Common myeloid progenitor, CD34-positive (primary cell): ENCODE measurements at regions of chr12 and their contacts with region 1.

Region 1: DNA sequence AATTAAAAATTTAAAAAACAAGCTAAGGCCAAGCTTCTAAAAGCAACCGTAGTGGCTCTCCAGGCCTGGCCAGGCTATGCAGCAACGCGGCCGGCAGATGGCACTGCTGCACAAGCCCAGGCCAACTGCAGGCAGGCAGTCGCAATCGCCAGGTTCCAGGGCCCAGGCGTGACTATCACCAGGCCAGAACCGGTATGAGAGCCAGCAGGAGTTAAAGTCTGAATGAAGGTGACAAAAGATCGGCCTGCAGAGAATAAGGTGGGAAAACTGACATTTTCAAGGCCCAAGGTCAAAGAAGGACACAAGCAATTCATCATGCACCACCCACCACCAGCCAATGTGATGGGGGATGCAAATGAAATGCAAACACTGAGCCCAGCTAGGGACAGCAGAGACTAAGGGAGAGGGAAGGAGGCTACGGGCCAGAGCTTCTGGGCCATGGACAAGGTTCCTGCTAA is 43.6 kb upstream of the ANO2 start:
- DNase-seq: peak; percentile 69 to 88 (median 81)
- H3K4me3 ChIP-seq: no peak overlapping the region
- H3K27ac ChIP-seq: no peak overlapping the region
- H3K4me1 ChIP-seq: no peaks in the 10 kb centered on the region
- H3K27me3 ChIP-seq: no peaks in the 10 kb centered on the region

Region 2: DNA sequence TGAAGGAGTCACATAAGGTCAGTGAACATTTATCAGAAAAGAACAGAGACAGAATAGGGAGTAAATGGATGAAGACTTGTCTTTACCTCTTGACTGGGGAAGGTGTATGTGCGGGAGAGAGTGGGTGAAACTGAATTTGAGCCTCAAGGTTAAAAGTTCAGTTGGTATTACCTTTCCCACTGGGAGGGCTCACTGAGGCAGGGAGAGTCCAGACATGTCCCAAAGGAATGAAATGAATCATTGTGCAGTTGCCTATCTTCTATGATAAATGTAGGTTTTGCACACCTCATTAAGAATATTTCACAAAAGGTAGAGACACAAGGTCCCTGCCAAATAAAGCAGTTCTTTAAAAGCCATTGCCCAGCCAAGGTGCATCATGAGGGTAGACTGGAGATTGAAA is 839.8 kb before region 1 on chr12:
- CTCF ChIA-PET with region 1: no interaction called
- POLR2A ChIA-PET with region 1: no interaction called
- DNase-seq: no peak
- H3K4me3 ChIP-seq: no peak overlapping the region
- H3K27ac ChIP-seq: no peak overlapping the region
- H3K4me1 ChIP-seq: no peaks in the 10 kb centered on the region
- H3K27me3 ChIP-seq: peaks cover 0 to 15% (median 8%) of the 10 kb centered on the region in 5 experiments

Region 3: GRCh38 chr12:5965950-5966383 is 22.7 kb before region 1 on chr12:
- CTCF ChIA-PET with region 1: interaction called, 12 read pairs
- POLR2A ChIA-PET with region 1: no interaction called
- DNase-seq: peak; percentile 38 to 61 (median 60)
- H3K4me3 ChIP-seq: no peak overlapping the region
- H3K27ac ChIP-seq: no peak overlapping the region
- H3K4me1 ChIP-seq: peaks cover 0 to 6% (median 0%) of the 10 kb centered on the region in 4 experiments
- H3K27me3 ChIP-seq: no peaks in the 10 kb centered on the region

Region 4: DNA sequence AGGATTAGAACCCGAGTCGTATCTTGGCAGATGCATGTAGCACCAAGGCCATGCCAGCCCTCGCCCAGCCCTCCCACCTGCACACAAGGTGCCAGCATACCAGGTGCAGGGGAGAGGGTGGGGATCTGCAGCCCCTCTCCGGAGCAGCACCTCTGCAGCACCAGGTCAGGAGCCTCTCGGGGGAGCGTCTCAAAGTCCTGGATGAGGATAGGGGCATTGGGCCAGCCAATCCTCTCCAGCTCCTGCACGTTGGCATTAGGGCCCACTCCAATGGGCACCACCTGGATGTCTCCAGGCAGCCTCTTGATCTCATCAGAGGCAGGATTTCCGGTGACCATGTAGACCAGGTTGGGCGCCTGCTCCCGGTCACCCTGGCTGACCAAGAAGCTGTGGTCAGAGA is 29.6 kb after region 1 on chr12:
- CTCF ChIA-PET with region 1: interaction called, 17 read pairs
- POLR2A ChIA-PET with region 1: no interaction called
- DNase-seq: no peak
- H3K4me3 ChIP-seq: no peak overlapping the region
- H3K27ac ChIP-seq: no peak overlapping the region
- H3K4me1 ChIP-seq: peaks cover 0 to 11% (median 5%) of the 10 kb centered on the region in 4 experiments
- H3K27me3 ChIP-seq: no peaks in the 10 kb centered on the region

Region 5: DNA sequence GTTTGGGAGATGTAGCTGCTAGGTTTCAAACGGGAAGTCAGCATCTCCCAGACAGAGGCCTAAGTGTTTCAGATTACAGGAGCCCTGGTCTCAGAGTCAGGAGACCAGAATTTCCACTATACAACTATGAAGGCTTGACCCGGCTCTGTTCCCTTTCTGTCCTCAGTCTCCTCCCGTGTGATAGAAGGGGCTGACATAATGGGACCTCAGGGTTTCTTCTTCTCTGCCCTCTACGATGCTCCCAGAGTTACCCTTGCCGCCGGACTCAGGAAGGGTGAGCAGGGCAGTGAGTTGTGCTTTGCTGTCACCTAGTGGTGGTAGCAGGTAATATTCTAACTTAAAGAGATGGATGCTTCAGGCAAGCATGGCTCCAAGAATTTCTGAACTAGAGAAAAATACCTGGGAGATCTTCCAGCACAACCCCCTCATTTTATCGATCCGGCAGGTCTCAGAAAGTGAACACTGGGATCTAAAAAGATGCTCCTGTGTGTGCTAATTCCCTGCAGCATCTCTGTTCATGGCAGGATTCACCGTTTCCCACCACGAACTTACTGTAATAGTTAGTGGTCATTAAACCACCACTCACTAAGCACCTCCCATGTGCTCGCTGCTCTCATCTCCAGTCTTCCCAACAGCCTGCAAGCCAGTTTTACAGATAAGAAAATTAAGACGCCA is 51.3 kb after region 1 on chr12:
- CTCF ChIA-PET with region 1: interaction called, 265 read pairs
- POLR2A ChIA-PET with region 1: interaction called, 4 read pairs
- DNase-seq: peak; percentile 51 to 76 (median 72)
- H3K4me3 ChIP-seq: peak overlapping the region in 1 of 7 experiments; percentile 20
- H3K27ac ChIP-seq: no peak overlapping the region
- H3K4me1 ChIP-seq: peaks cover 0 to 7% (median 0%) of the 10 kb centered on the region in 4 experiments
- H3K27me3 ChIP-seq: no peaks in the 10 kb centered on the region

Region 6: GRCh38 chr12:6056406-6057240 is 67.9 kb after region 1 on chr12:
- CTCF ChIA-PET with region 1: interaction called, 20 read pairs
- POLR2A ChIA-PET with region 1: interaction called, 3 read pairs
- DNase-seq: peak; percentile 73 to 81 (median 79)
- H3K4me3 ChIP-seq: peak overlapping the region in 4 of 7 experiments; percentile 0 to 68 (median 36)
- H3K27ac ChIP-seq: no peak overlapping the region
- H3K4me1 ChIP-seq: peaks cover 0 to 21% (median 9%) of the 10 kb centered on the region in 4 experiments
- H3K27me3 ChIP-seq: no peaks in the 10 kb centered on the region